CD4-positive, alpha-beta T cell (primary cell): ENCODE measurements at regions of chr1 and their contacts with region 1.

Region 1: GRCh38 chr1:82001345-82001744 is 200.6 kb downstream of the ADGRL2 start:
- DNase-seq: no peak
- ATAC-seq: no peak
- H3K4me3 ChIP-seq: no peak overlapping the region
- H3K4me3 Mint-ChIP-seq: no peak overlapping the region
- H3K27ac ChIP-seq: no peak overlapping the region
- H3K27ac Mint-ChIP-seq: no peak overlapping the region
- H3K4me1 ChIP-seq: no peaks in the 10 kb centered on the region
- H3K4me1 Mint-ChIP-seq: no peaks in the 10 kb centered on the region
- H3K27me3 ChIP-seq: no peaks in the 10 kb centered on the region
- H3K27me3 Mint-ChIP-seq: no peaks in the 10 kb centered on the region
- CTCF ChIP-seq: no peak

Region 2: GRCh38 chr1:82879701-82880305 is 878.5 kb after region 1 on chr1:
- CTCF ChIA-PET with region 1: no interaction called
- POLR2A ChIA-PET with region 1: no interaction called
- intact Hi-C with region 1: loop called in 1 of 2 experiments (anchors 5 kb)
- DNase-seq: no peak
- ATAC-seq: no peak
- H3K4me3 ChIP-seq: no peak overlapping the region
- H3K4me3 Mint-ChIP-seq: no peak overlapping the region
- H3K27ac ChIP-seq: no peak overlapping the region
- H3K27ac Mint-ChIP-seq: no peak overlapping the region
- H3K4me1 ChIP-seq: no peaks in the 10 kb centered on the region
- H3K4me1 Mint-ChIP-seq: no peaks in the 10 kb centered on the region
- H3K27me3 ChIP-seq: no peaks in the 10 kb centered on the region
- H3K27me3 Mint-ChIP-seq: no peaks in the 10 kb centered on the region
- CTCF ChIP-seq: no peak